CD4-positive, alpha-beta memory T cell (primary cell): ENCODE measurements at regions of chr5 and their contacts with region 1.

Region 1: DNA sequence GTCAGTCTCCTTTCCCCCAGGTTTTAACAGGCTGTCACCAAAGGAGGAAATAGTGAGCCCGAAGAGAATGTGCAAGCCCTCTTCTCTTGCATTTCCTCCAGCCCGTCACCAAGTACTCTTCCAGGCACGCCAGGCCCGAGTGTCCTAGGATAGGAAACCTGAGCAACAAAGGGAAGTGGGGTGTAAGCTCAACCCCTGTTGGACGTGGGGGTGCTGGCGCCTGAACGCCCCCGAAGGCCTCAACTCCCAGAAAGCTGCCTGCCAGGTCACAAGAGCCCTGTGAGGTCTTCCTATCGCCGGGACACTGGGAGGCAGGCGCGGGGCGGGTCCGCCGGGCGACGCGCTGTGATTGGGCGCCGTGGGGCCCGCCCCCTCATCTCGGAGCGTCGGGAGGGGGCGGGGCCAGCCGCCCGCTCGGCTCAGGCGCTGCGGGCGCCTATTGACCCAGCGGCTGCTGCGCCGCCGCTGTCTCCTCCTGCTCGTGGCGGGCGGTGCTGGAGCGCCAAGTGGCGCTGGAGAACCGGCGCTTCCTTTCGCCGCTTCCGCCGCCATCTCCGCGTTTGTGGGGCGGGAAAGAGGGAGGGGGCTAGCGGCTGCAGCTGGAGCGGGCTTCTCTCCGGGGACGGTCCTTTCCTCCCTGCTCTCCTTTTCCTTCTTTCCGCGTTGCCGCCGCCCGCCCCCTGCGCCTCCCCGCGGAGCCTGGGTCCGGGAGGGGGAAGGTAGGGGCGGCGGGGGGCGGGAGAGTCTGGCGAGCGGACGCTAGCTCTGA is 572 bp upstream of the MAN2A1 start:
- DNase-seq: peak; percentile 77 to 83 (median 79)
- H3K4me3 ChIP-seq: peak overlapping the region; percentile 30 to 75
- H3K4me3 Mint-ChIP-seq: peak overlapping the region; percentile 88 to 96 (median 92)
- H3K27ac ChIP-seq: peak overlapping the region; percentile 88
- H3K27ac Mint-ChIP-seq: peak overlapping the region; percentile 79 to 97 (median 94)
- H3K4me1 ChIP-seq: peaks cover 34% of the 10 kb centered on the region
- H3K4me1 Mint-ChIP-seq: peaks cover 25 to 37% (median 31%) of the 10 kb centered on the region in 4 donors
- H3K27me3 ChIP-seq: no peaks in the 10 kb centered on the region
- H3K27me3 Mint-ChIP-seq: no peaks in the 10 kb centered on the region

Region 2: GRCh38 chr5:108748401-108749127 is 940.6 kb before region 1 on chr5:
- CTCF ChIA-PET with region 1: no interaction called
- POLR2A ChIA-PET with region 1: interaction called, 3 read pairs
- intact Hi-C with region 1: loop called (anchors 2 kb)
- DNase-seq: peak; percentile 97 to 99 (median 98)
- H3K4me3 ChIP-seq: peak overlapping the region; percentile 82 to 87
- H3K4me3 Mint-ChIP-seq: peak overlapping the region; percentile 91 to 94 (median 92)
- H3K27ac ChIP-seq: peak overlapping the region; percentile 86
- H3K27ac Mint-ChIP-seq: peak overlapping the region; percentile 88 to 98 (median 97)
- H3K4me1 ChIP-seq: peaks cover 19% of the 10 kb centered on the region
- H3K4me1 Mint-ChIP-seq: peaks cover 7 to 20% (median 12%) of the 10 kb centered on the region in 4 donors
- H3K27me3 ChIP-seq: no peaks in the 10 kb centered on the region
- H3K27me3 Mint-ChIP-seq: peaks cover 0 to 5% of the 10 kb centered on the region in 2 donors

Region 3: DNA sequence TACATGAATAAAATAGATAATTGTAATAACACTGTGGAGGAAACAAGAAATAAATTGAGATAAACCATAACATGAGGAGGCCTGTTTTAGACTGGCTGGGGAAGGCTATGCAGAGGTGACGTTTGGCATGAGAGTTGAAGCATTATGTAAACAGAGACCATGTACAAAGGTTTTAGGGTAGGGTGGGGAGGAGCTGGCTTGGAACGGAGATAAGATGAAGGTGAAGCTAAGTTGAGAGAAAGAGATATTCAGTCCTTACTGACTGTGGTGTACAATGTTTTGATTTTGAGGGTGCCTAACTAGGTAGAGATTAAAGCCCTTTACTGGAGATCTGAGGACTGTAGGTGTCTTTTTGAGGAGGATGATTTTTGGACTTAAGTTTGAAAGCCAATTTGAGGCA is 18.4 kb after region 1 on chr5:
- CTCF ChIA-PET with region 1: interaction called, 3 read pairs
- POLR2A ChIA-PET with region 1: interaction called, 9 read pairs
- intact Hi-C with region 1: loop called (anchors 2 kb)
- DNase-seq: no peak
- H3K4me3 ChIP-seq: no peak overlapping the region
- H3K4me3 Mint-ChIP-seq: peak overlapping the region in 4 of 8 donors; percentile 0 to 44 (median 20)
- H3K27ac ChIP-seq: no peak overlapping the region
- H3K27ac Mint-ChIP-seq: peak overlapping the region in 3 of 7 donors; percentile 4 to 60 (median 49)
- H3K4me1 ChIP-seq: peaks cover 79% of the 10 kb centered on the region
- H3K4me1 Mint-ChIP-seq: peaks cover 57 to 86% (median 74%) of the 10 kb centered on the region in 4 donors
- H3K27me3 ChIP-seq: no peaks in the 10 kb centered on the region
- H3K27me3 Mint-ChIP-seq: no peaks in the 10 kb centered on the region

Region 4: GRCh38 chr5:110054240-110054639 is 365.1 kb after region 1 on chr5:
- CTCF ChIA-PET with region 1: interaction called, 4 read pairs
- POLR2A ChIA-PET with region 1: interaction called, 27 read pairs
- intact Hi-C with region 1: loop called (anchors 1 kb)
- DNase-seq: peak; percentile 84 to 88 (median 86)
- H3K4me3 ChIP-seq: no peak overlapping the region
- H3K4me3 Mint-ChIP-seq: peak overlapping the region; percentile 25 to 82 (median 64)
- H3K27ac ChIP-seq: peak overlapping the region; percentile 18
- H3K27ac Mint-ChIP-seq: peak overlapping the region; percentile 59 to 96 (median 94)
- H3K4me1 ChIP-seq: peaks cover 33% of the 10 kb centered on the region
- H3K4me1 Mint-ChIP-seq: peaks cover 25 to 36% (median 31%) of the 10 kb centered on the region in 4 donors
- H3K27me3 ChIP-seq: no peaks in the 10 kb centered on the region
- H3K27me3 Mint-ChIP-seq: peaks cover 0 to 2% of the 10 kb centered on the region in 2 donors

Region 5: DNA sequence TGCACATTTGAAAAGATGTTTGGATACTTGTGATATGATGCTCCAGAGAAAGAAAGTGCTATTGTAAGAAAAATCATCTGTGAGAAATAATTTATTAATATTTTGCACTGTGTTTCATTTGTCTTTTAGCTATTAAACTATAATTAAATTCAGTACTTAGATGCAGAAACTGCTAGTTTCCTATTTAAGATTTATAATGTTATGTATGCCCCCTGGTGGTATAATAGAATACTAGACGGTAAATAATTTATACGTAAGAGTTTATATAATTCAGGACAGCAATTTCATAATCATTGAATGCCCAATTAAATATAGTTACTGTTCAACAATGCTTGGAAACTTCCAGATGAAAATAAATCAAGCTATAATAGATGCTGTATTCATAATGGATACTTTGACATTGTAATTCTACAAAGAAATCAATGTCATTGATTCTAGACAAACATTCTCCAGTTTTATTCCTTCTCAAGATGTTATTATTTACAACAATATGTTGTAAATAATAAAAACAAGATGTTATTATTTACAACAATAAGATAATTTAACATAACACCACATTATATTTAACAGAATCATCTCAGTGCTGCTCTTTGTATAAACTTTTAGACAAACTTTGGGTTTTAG is 936.3 kb after region 1 on chr5:
- CTCF ChIA-PET with region 1: interaction called, 4 read pairs
- POLR2A ChIA-PET with region 1: no interaction called
- intact Hi-C with region 1: loop called (anchors 1 kb)
- DNase-seq: peak in 3 of 5 donors; percentile 19 to 35 (median 26)
- H3K4me3 ChIP-seq: no peak overlapping the region
- H3K4me3 Mint-ChIP-seq: no peak overlapping the region
- H3K27ac ChIP-seq: no peak overlapping the region
- H3K27ac Mint-ChIP-seq: no peak overlapping the region
- H3K4me1 ChIP-seq: no peaks in the 10 kb centered on the region
- H3K4me1 Mint-ChIP-seq: no peaks in the 10 kb centered on the region
- H3K27me3 ChIP-seq: no peaks in the 10 kb centered on the region
- H3K27me3 Mint-ChIP-seq: peaks cover 2 to 4% of the 10 kb centered on the region in 2 donors

Region 6: DNA sequence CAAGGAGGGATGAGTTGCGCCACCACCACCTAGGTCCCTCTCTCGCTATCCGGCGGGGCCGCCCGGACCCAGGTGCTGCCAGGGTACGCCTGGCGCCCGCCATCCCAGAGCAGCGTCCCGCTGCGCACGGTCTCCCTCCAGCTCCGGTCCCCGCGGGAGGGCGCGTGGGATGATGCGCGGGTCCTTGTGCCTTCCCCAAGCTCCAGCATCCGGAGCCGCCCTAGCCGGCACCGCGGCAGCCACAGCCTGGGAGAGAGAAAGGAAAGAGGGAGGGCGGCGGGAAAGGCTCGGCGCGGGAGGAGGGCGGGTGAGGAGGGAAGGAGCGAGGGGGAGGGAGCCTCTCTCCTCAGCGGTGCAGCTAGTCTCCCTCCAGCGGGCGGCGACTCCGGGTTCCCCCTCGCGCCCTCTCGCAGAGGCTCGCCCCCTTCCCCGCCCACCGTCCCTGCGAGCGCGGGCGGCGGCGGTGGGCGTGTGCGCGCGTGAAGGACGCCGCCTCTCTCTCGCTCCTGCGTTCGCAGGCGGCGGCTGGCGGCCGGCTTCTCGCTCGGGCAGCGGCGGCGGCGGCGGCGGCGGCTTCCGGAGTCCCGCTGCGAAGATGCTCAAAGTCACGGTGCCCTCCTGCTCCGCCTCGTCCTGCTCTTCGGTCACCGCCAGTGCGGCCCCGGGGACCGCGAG is 1534.9 kb after region 1 on chr5 and contains the start of gene CAMK4:
- CTCF ChIA-PET with region 1: no interaction called
- POLR2A ChIA-PET with region 1: no interaction called
- intact Hi-C with region 1: loop called (anchors 10 kb)
- DNase-seq: peak; percentile 83 to 87 (median 84)
- H3K4me3 ChIP-seq: peak within 1 kb of the TSS; percentile 74 to 87
- H3K4me3 Mint-ChIP-seq: peak within 1 kb of the TSS; percentile 94 to 98 (median 96)
- H3K27ac ChIP-seq: peak within 1 kb of the TSS; percentile 82
- H3K27ac Mint-ChIP-seq: peak within 1 kb of the TSS; percentile 88 to 97 (median 94)
- H3K4me1 ChIP-seq: peaks cover 34% of the 10 kb centered on the region
- H3K4me1 Mint-ChIP-seq: peaks cover 19 to 51% (median 30%) of the 10 kb centered on the region in 4 donors
- H3K27me3 ChIP-seq: no peaks in the 10 kb centered on the region
- H3K27me3 Mint-ChIP-seq: no peaks in the 10 kb centered on the region
- total RNA-seq, gene CAMK4: 243 to 257 TPM